ENCODE measurements at regions of chr22 and their contacts with region 1.

Region 1: GRCh38 chr22:45602824-45603630 is 68.6 kb upstream of the ATXN10 start:
- DNase-seq: peak in 1 of 2 experiments; percentile 46
- H3K4me3 ChIP-seq: no peak overlapping the region
- H3K27ac ChIP-seq: no peak overlapping the region
- H3K4me1 ChIP-seq: peaks cover 43% of the 10 kb centered on the region
- H3K27me3 ChIP-seq: no peaks in the 10 kb centered on the region
- CTCF ChIP-seq: no peak

Region 2: GRCh38 chr22:45246060-45246985 is 356.7 kb before region 1 on chr22:
- CTCF ChIA-PET with region 1: no interaction called
- POLR2A ChIA-PET with region 1: interaction called, 13 read pairs
- intact Hi-C with region 1: no loop called
- DNase-seq: peak; percentile 61 to 62
- H3K4me3 ChIP-seq: no peak overlapping the region
- H3K27ac ChIP-seq: peak overlapping the region; percentile 48
- H3K4me1 ChIP-seq: peaks cover 8% of the 10 kb centered on the region
- H3K27me3 ChIP-seq: no peaks in the 10 kb centered on the region
- CTCF ChIP-seq: no peak

Region 3: GRCh38 chr22:45664136-45664646 is 61.2 kb after region 1 on chr22:
- CTCF ChIA-PET with region 1: no interaction called
- POLR2A ChIA-PET with region 1: interaction called, 22 read pairs
- intact Hi-C with region 1: no loop called
- DNase-seq: no peak
- H3K4me3 ChIP-seq: no peak overlapping the region
- H3K27ac ChIP-seq: no peak overlapping the region
- H3K4me1 ChIP-seq: no peaks in the 10 kb centered on the region
- H3K27me3 ChIP-seq: no peaks in the 10 kb centered on the region
- CTCF ChIP-seq: no peak

Measured in PC-9 (cell line).